Lower leg skin (tissue), 4 donors: ENCODE measurements at regions of chr4 and their contacts with region 1.

Region 1: GRCh38 chr4:13024147-13025105 is 459.7 kb downstream of the RAB28 start:
- DNase-seq: no peak
- H3K4me3 ChIP-seq: no peak overlapping the region
- CTCF ChIP-seq: no peak
- POLR2A ChIP-seq: no peak

Region 2: DNA sequence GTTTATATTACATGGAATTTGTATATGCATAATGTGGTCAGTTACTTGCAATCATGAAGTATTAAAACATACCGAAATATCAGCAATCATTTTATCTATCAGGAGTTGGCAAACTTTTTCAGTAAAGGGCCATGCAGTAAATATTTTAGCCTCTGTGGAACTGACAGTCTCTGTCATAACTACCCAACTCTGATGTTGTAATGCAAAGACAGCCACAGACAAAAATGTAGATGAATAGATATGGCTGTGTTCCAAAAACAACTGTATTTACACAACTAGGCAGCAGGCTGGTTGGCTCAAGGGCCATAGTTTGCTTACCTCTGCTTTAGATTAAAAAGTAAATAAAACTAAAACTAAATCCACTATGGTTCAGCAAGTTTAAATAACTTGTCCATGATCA is 1795.9 kb before region 1 on chr4:
- intact Hi-C with region 1: loop called (anchors 5 kb)
- DNase-seq: no peak
- H3K4me3 ChIP-seq: no peak overlapping the region
- CTCF ChIP-seq: no peak
- POLR2A ChIP-seq: no peak

Region 3: DNA sequence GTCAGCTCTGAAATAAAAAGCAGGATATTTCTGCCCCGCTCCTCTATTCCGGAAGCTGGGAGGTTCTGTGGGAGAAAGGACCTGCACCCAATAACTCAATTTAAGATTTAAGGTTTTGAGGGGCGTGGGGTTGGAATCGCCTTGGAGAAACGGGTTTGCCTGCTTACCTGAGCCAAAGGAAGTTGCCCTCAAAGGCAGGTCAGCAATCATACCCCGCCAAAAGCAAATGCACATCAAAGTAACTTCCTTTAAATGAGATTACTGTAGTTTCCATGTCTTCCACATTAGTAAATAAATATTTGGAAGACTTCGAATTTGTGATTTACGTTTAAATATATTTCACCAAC is 1594.8 kb before region 1 on chr4:
- intact Hi-C with region 1: loop called (anchors 5 kb)
- DNase-seq: no peak
- H3K4me3 ChIP-seq: peak overlapping the region; percentile 55
- CTCF ChIP-seq: no peak
- POLR2A ChIP-seq: no peak

Region 4: GRCh38 chr4:11847167-11847566 is 1177.3 kb before region 1 on chr4:
- intact Hi-C with region 1: no loop called
- DNase-seq: no peak
- H3K4me3 ChIP-seq: no peak overlapping the region
- CTCF ChIP-seq: no peak
- POLR2A ChIP-seq: no peak

Region 5: GRCh38 chr4:12399781-12400180 is 624.6 kb before region 1 on chr4:
- intact Hi-C with region 1: no loop called
- DNase-seq: no peak
- H3K4me3 ChIP-seq: no peak overlapping the region
- CTCF ChIP-seq: no peak
- POLR2A ChIP-seq: no peak

Region 6: GRCh38 chr4:12724510-12724909 is 299.9 kb before region 1 on chr4:
- intact Hi-C with region 1: no loop called
- DNase-seq: no peak
- H3K4me3 ChIP-seq: no peak overlapping the region
- CTCF ChIP-seq: no peak
- POLR2A ChIP-seq: no peak

Region 7: GRCh38 chr4:12746221-12746620 is 278.2 kb before region 1 on chr4:
- intact Hi-C with region 1: no loop called
- DNase-seq: no peak
- H3K4me3 ChIP-seq: no peak overlapping the region
- CTCF ChIP-seq: no peak
- POLR2A ChIP-seq: no peak